ENCODE measurements at regions of chr17 and their contacts with region 1.

Region 1: GRCh38 chr17:72556944-72557826 is 436.4 kb downstream of the SOX9 start:
- DNase-seq: no peak
- ATAC-seq: peak; percentile 63
- H3K4me3 ChIP-seq: no peak overlapping the region
- H3K27ac ChIP-seq: peak overlapping the region; percentile 65
- H3K4me1 ChIP-seq: peaks cover 64% of the 10 kb centered on the region
- H3K27me3 ChIP-seq: no peaks in the 10 kb centered on the region
- CTCF ChIP-seq: peak; percentile 97

Region 2: DNA sequence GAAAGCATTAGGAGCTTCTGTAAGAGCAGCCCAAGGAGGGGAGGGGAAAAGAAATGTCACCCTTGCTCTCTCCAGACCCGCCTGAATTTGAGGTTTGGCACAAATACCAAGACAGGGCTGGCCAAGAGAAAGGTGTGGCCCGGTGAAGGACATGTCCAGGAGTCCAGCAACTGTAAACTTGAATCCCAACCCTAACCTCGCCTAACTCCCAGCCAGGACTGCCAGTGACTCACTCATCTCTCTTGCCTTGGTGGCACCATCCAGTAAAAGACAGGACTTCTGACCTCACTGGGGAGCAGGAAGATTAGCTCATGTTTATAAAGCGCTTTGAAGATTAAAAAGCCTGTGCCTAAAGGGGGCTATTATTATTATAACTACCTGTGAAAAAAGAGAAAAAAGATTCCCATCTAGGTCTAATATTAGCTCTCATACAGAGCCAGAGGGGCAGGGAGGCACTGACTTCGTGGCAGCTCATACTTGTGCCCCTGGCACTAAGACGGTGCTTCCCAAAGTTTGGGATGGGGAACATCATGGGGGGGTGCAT is 101.1 kb before region 1 on chr17:
- CTCF ChIA-PET with region 1: no interaction called
- POLR2A ChIA-PET with region 1: no interaction called
- in situ Hi-C with region 1: no loop called
- intact Hi-C with region 1: no loop called
- DNase-seq: no peak
- ATAC-seq: peak; percentile 63
- H3K4me3 ChIP-seq: peak overlapping the region in 1 of 2 experiments; percentile 28; a peak in 2 of 4 replicates
- H3K27ac ChIP-seq: peak overlapping the region; percentile 98
- H3K4me1 ChIP-seq: peaks cover 93% of the 10 kb centered on the region
- H3K27me3 ChIP-seq: no peaks in the 10 kb centered on the region
- CTCF ChIP-seq: no peak

Region 3: GRCh38 chr17:72506773-72507172 is 50.4 kb before region 1 on chr17:
- CTCF ChIA-PET with region 1: no interaction called
- POLR2A ChIA-PET with region 1: no interaction called
- in situ Hi-C with region 1: no loop called
- intact Hi-C with region 1: no loop called
- DNase-seq: no peak
- ATAC-seq: no peak
- H3K4me3 ChIP-seq: no peak overlapping the region
- H3K27ac ChIP-seq: peak overlapping the region; percentile 73
- H3K4me1 ChIP-seq: peaks cover 87% of the 10 kb centered on the region
- H3K27me3 ChIP-seq: no peaks in the 10 kb centered on the region
- CTCF ChIP-seq: no peak

Region 4: DNA sequence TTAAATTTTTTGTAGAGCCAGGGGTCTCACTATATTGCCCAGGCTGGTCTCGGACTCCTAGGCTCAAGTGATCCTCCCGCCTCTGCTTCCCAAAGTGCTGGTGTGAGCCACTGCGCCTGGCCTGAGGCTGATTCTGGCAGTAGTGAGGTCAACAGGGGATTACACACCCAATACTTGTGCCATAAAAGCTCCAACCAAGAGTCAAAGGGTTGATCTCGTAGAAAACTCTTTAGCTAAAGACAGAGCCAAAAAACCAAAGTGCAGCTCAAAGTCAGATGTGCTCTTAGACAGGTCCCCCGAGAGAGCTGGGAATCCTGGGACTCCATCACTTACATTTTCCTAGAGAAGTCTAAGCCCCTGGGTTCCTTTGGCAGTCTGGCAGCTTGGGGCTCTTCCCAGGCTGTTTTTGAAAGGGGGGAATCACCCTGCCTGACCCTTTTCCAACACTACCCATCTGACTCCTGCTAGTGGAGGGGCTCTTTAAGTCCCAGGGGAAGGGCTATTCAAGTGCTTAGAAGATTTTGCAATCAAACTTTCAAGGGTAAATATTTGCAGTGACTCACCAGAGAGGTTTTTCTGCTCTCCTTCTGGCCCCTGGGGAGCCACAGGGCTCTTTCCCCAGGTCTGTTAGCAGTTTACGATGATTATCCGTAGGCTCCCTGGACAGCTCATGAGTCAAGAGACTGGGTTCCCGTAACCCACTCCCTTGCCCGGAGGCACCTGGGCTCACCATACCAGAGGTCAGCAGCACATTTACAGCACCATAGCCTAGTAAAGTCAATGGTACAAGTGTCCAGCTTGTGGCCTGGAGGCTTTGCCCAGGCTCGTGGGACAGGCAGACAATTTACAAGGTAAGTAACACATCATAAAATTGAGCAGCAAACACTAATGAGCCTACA is 126.6 kb after region 1 on chr17:
- CTCF ChIA-PET with region 1: interaction called, 6 read pairs
- POLR2A ChIA-PET with region 1: no interaction called
- in situ Hi-C with region 1: no loop called
- intact Hi-C with region 1: loop called (anchors 10 kb)
- DNase-seq: peak; percentile 86
- ATAC-seq: peak; percentile 96
- H3K4me3 ChIP-seq: peak overlapping the region; percentile 5 to 20; a peak in 2 of 4 replicates
- H3K27ac ChIP-seq: peak overlapping the region; percentile 100
- H3K4me1 ChIP-seq: peaks cover 66% of the 10 kb centered on the region
- H3K27me3 ChIP-seq: no peaks in the 10 kb centered on the region
- CTCF ChIP-seq: no peak

Region 5: DNA sequence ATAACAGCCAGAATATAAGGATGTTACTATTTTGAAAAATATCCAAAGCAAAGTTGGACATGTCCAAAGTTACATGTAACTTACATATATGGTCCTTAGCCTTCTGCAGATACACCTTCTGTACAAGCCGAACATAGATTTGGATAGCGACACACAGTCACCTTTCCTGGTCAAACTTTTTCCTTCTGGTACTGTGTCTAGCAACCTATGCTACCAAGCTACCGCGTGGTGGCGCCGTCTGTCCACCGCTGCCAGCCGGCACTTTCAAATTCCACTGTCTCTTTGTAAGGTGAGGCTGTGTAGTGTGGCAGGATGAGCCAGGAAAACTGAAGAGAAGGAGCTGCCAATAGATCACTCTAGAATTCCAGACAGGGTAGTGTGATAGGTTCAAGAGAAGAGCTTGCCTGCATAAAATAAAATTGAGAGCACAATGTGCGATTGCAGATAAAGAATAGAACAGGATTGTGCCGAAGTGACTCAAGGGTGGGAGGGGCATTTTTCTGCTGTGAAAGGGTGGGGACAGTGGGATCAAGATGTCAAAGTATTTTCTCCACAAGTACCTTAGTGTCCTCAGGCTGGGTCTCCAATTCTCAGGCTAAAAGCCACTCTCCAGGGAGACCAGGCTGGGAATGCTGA is 168.4 kb after region 1 on chr17:
- CTCF ChIA-PET with region 1: interaction called, 38 read pairs
- POLR2A ChIA-PET with region 1: no interaction called
- in situ Hi-C with region 1: no loop called
- intact Hi-C with region 1: loop called (anchors 1 kb)
- DNase-seq: no peak
- ATAC-seq: peak; percentile 85
- H3K4me3 ChIP-seq: no peak overlapping the region
- H3K27ac ChIP-seq: peak overlapping the region; percentile 83
- H3K4me1 ChIP-seq: peaks cover 31% of the 10 kb centered on the region
- H3K27me3 ChIP-seq: no peaks in the 10 kb centered on the region
- CTCF ChIP-seq: peak; percentile 99

Region 6: DNA sequence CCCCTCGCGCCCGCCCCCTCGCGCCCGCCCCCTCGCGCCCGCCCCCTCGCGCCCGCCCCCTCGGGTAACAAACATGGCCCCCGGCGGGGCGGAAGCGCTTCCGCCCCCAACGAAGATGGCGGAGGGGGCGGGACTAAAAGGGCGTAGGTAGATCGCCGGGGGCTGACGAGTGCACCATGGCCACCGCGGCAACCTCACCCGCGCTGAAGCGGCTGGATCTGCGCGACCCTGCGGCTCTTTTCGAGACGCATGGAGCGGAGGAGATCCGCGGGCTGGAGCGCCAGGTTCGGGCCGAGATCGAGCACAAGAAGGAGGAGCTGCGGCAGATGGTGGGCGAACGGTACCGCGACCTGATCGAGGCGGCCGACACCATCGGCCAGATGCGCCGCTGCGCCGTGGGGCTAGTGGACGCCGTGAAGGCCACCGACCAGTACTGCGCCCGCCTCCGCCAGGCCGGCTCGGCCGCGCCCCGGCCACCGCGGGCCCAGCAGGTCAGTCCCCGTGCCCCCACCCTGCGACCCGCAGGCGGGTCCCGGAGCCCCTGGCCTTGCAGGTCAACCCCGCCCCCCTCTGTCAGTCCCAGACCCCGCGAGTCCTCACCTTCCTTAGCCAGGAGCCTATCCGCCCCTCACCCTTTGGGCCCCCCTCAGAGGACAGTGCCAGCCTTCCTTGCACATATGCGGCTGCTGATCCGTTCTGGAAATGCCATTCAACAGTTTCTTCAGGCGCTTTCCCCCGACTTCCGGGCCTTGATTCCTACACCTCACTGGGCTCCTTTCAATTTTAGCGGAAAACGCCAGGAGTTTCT is 635.9 kb after region 1 on chr17 and contains the start of gene COG1:
- CTCF ChIA-PET with region 1: interaction called, 11 read pairs
- POLR2A ChIA-PET with region 1: no interaction called
- in situ Hi-C with region 1: no loop called
- intact Hi-C with region 1: loop called (anchors 5 kb)
- DNase-seq: no peak
- ATAC-seq: peak; percentile 87
- H3K4me3 ChIP-seq: peak within 1 kb of the TSS; percentile 62 to 89
- H3K27ac ChIP-seq: peak within 1 kb of the TSS; percentile 90
- H3K4me1 ChIP-seq: peaks cover 14% of the 10 kb centered on the region; the same call in 1 of the 2 replicates
- H3K27me3 ChIP-seq: no peaks in the 10 kb centered on the region
- CTCF ChIP-seq: no peak
- total RNA-seq, gene COG1: 41.2 TPM

Measured in Panc1 (cell line).